Activated CD8-positive, alpha-beta T cell treated with anti-CD3 and anti-CD28 coated beads, Interleukin-2, amount 10 ng/mL, durations not matched to agents 7 days and 5 days (primary cell): ENCODE measurements at regions of chr3 and their contacts with region 1.

Region 1: GRCh38 chr3:129316131-129317013 is 37.7 kb downstream of the HMCES start:
- DNase-seq: peak; percentile 92
- ATAC-seq: peak; percentile 48
- H3K4me3 Mint-ChIP-seq: peak overlapping the region; percentile 91
- H3K27ac Mint-ChIP-seq: peak overlapping the region; percentile 66
- H3K4me1 Mint-ChIP-seq: peaks cover 34% of the 10 kb centered on the region
- H3K27me3 Mint-ChIP-seq: no peaks in the 10 kb centered on the region

Region 2: GRCh38 chr3:128787256-128788240 is 528.8 kb before region 1 on chr3:
- CTCF ChIA-PET with region 1: no interaction called
- POLR2A ChIA-PET with region 1: interaction called, 11 read pairs
- DNase-seq: peak; percentile 53
- ATAC-seq: peak; percentile 64
- H3K4me3 Mint-ChIP-seq: peak overlapping the region; percentile 75
- H3K27ac Mint-ChIP-seq: peak overlapping the region; percentile 96
- H3K4me1 Mint-ChIP-seq: peaks cover 82% of the 10 kb centered on the region
- H3K27me3 Mint-ChIP-seq: no peaks in the 10 kb centered on the region

Region 3: GRCh38 chr3:129016356-129016719 is 300.0 kb before region 1 on chr3:
- CTCF ChIA-PET with region 1: no interaction called
- POLR2A ChIA-PET with region 1: interaction called, 21 read pairs
- DNase-seq: peak; percentile 81
- ATAC-seq: peak; percentile 88
- H3K4me3 Mint-ChIP-seq: peak overlapping the region; percentile 66
- H3K27ac Mint-ChIP-seq: peak overlapping the region; percentile 91
- H3K4me1 Mint-ChIP-seq: peaks cover 37% of the 10 kb centered on the region
- H3K27me3 Mint-ChIP-seq: no peaks in the 10 kb centered on the region

Region 4: DNA sequence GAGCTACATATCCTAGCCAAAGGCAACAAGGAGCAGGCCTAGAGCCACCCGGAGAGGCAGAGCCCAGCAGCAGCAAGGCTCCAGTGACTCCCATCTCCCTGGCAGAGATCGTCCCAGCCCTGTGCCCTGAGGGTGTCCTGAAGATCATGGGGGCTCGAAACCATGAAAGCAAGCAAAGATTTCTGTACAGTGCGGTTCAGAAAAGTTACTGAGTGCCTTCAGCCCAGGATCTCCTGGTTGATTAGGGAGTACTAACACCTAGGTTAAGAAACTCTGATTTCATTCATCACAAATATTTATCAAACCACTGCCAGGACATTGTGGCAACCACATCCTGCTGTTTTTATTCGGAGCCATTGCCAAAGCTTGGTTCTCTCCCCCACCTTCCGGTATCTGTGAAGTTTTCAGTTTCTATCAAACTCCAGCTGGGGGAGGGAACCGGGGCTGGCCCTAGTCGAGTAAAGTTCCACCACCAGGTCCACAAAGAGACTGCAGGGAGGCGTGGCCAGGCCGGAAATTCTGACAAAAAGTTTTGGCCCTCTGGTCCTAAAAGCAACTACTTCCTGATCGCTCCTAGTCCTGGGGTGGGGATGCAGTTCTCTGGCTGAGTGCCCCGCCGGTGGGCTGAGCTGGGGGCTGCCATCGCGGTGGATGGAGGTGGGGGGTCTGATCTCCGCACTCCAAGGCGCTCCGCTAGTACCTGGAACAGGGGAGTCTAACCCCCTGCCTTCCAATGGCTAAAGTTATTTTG is 195.9 kb before region 1 on chr3:
- CTCF ChIA-PET with region 1: no interaction called
- POLR2A ChIA-PET with region 1: interaction called, 50 read pairs
- DNase-seq: peak; percentile 98
- ATAC-seq: peak; percentile 69
- H3K4me3 Mint-ChIP-seq: peak overlapping the region; percentile 84
- H3K27ac Mint-ChIP-seq: peak overlapping the region; percentile 91
- H3K4me1 Mint-ChIP-seq: peaks cover 56% of the 10 kb centered on the region
- H3K27me3 Mint-ChIP-seq: no peaks in the 10 kb centered on the region

Region 5: GRCh38 chr3:129278439-129278970 is 37.9 kb before region 1 on chr3 and contains the start of gene HMCES:
- CTCF ChIA-PET with region 1: interaction called, 17 read pairs
- POLR2A ChIA-PET with region 1: interaction called, 47 read pairs
- DNase-seq: peak; percentile 96
- ATAC-seq: peak; percentile 91
- H3K4me3 Mint-ChIP-seq: peak within 1 kb of the TSS; percentile 98
- H3K27ac Mint-ChIP-seq: peak within 1 kb of the TSS; percentile 99
- H3K4me1 Mint-ChIP-seq: peaks cover 60% of the 10 kb centered on the region
- H3K27me3 Mint-ChIP-seq: no peaks in the 10 kb centered on the region
- total RNA-seq, gene HMCES: 58.2 to 62.2 TPM

Region 6: DNA sequence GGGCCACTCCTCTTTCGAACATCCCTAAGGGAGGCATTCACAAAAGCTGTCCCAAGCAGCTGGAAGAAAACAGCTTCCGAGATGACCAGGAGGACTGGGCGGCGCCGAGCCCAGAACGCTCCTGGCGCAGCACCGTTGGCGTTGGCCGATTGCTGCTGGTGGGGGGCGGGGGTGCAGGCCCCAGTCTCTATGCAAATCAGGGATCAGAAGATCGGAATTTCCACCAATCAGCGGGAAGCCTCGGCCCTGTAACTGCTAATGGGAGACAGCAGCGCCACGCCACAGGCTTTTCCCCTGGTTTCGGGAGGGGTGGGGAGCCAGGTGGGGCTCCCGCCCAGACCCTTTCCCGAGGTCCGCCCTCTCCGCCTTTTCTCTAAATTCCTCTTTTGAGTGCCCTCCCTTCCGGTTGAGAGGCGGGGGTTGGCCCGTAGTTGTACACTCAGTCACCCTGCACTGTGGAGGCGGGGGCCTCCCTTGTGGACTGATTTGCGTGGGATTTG is 10.7 kb before region 1 on chr3:
- CTCF ChIA-PET with region 1: interaction called, 5 read pairs
- POLR2A ChIA-PET with region 1: interaction called, 35 read pairs
- DNase-seq: no peak
- ATAC-seq: no peak
- H3K4me3 Mint-ChIP-seq: no peak overlapping the region
- H3K27ac Mint-ChIP-seq: no peak overlapping the region
- H3K4me1 Mint-ChIP-seq: peaks cover 35% of the 10 kb centered on the region
- H3K27me3 Mint-ChIP-seq: no peaks in the 10 kb centered on the region

Region 7: GRCh38 chr3:129399145-129399894 is 82.9 kb after region 1 on chr3:
- CTCF ChIA-PET with region 1: no interaction called
- POLR2A ChIA-PET with region 1: interaction called, 13 read pairs
- DNase-seq: peak; percentile 85
- ATAC-seq: peak; percentile 82
- H3K4me3 Mint-ChIP-seq: peak overlapping the region; percentile 93
- H3K27ac Mint-ChIP-seq: peak overlapping the region; percentile 97
- H3K4me1 Mint-ChIP-seq: peaks cover 37% of the 10 kb centered on the region
- H3K27me3 Mint-ChIP-seq: no peaks in the 10 kb centered on the region